ENCODE measurements at regions of chr19 and their contacts with region 1.

Region 1: GRCh38 chr19:4108767-4109625 is 14.9 kb downstream of the MAP2K2 start:
- DNase-seq: no peak
- ATAC-seq: no peak
- H3K4me3 ChIP-seq: no peak overlapping the region
- H3K27ac ChIP-seq: no peak overlapping the region
- H3K4me1 ChIP-seq: no peaks in the 10 kb centered on the region; the same call in 1 of the 2 replicates
- H3K27me3 ChIP-seq: no peaks in the 10 kb centered on the region
- CTCF ChIP-seq: no peak

Region 2: GRCh38 chr19:4007021-4007835 is 101.8 kb before region 1 on chr19 and contains the start of gene PIAS4:
- CTCF ChIA-PET with region 1: no interaction called
- POLR2A ChIA-PET with region 1: interaction called, 12 read pairs
- intact Hi-C with region 1: no loop called
- DNase-seq: peak; percentile 92
- ATAC-seq: peak; percentile 94
- H3K4me3 ChIP-seq: peak within 1 kb of the TSS; percentile 98
- H3K27ac ChIP-seq: peak within 1 kb of the TSS; percentile 37; the same call in 1 of the 2 replicates
- H3K4me1 ChIP-seq: peaks cover 5% of the 10 kb centered on the region; the same call in 1 of the 2 replicates
- H3K27me3 ChIP-seq: no peaks in the 10 kb centered on the region
- CTCF ChIP-seq: no peak
- total RNA-seq, gene PIAS4: 21.0 and 26.5 TPM in 2 replicates